ENCODE measurements at regions of chr10 and their contacts with region 1.

Region 1: DNA sequence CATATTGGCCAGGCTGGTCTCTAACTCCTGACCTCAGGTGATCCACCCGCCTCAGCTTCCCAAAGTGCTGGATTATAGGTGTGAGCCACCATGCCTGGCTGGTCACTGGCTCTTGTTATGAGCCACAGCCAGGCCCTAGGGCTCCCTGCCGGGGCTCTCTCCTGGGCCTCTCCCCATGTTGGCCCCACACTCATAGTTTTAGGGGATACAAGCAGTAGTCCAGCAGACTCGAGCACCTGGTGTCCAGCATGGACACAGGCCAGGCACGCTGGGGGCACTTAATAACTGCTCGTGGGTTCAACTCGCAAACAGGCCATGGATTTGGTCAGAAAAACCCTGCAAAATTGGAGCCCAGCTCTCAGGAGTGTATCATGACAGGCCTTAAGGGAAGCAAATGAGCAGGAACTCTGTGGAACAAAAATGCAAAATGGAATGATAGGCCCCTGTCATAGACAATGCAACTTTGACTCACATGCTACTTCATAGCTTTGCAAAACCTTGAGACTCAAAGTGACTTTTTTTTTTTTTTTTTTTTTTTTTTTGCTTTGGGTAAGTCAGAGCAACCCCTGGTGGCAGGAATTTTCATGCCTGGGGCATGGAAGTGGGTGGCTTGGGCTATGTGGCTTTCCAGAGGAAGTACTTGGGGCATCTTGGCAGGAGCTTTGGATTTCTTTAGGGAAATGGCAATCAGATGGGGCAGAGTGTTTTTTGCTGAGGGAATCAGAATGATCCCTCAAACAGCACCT is 62.5 kb downstream of the TACC2 start:
- H3K4me3 ChIP-seq: no peak overlapping the region
- H3K27ac ChIP-seq: no peak overlapping the region
- H3K4me1 ChIP-seq: 0 out of 2 replicates have a peak, but pooled peaks cover under 1% of the 10 kb centered on the region
- CTCF ChIP-seq: no peak

Region 2: GRCh38 chr10:122040786-122041185 is 10.6 kb before region 1 on chr10:
- CTCF ChIA-PET with region 1: interaction called, 11 read pairs
- POLR2A ChIA-PET with region 1: no interaction called
- H3K4me3 ChIP-seq: no peak overlapping the region
- H3K27ac ChIP-seq: no peak overlapping the region
- H3K4me1 ChIP-seq: peaks cover 6% of the 10 kb centered on the region
- CTCF ChIP-seq: no peak

Region 3: DNA sequence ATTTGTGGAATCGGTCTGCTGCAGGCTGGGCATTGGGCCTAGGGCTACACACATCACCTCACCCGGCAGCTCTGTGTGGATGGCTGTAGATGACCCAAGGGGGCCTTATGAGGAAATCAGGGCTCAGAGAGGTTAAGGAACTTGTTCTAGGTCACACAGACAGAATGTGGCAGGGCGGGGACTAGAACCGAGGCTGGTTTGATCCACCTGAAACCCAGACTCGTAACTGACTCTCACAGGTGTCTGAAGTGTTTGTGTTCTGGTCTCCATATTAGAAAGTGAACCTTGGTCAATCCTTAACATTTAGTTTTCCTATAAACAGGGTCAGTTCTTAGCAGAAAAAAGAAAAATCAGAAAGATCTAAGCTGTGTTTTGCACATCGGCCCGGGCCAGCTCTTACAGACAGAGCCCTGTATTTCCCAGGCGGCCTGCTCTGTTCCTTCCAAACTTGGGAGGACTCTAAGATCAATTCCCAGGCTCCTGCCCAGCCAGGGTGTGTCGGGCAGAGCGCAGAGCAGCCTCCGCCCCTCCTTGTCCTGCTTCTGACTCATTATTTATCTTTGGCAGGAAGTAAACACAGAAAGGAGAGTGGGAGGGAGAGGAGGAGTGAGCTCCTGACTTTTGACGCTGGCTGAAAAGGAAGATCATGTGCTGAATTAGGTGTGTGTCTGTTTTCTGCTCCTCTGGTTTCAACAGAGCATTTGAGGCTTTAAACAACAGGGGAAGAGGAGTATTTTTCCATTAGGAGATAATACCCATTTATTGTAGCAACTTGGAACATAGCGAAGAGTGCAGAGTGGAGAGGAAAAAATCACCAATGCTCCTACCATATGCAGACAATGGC is 11.6 kb after region 1 on chr10:
- CTCF ChIA-PET with region 1: interaction called, 28 read pairs
- POLR2A ChIA-PET with region 1: no interaction called
- H3K4me3 ChIP-seq: no peak overlapping the region
- H3K27ac ChIP-seq: peak overlapping the region; percentile 55
- H3K4me1 ChIP-seq: peaks cover 9% of the 10 kb centered on the region; the same call in 1 of the 2 replicates
- CTCF ChIP-seq: no peak

Region 4: DNA sequence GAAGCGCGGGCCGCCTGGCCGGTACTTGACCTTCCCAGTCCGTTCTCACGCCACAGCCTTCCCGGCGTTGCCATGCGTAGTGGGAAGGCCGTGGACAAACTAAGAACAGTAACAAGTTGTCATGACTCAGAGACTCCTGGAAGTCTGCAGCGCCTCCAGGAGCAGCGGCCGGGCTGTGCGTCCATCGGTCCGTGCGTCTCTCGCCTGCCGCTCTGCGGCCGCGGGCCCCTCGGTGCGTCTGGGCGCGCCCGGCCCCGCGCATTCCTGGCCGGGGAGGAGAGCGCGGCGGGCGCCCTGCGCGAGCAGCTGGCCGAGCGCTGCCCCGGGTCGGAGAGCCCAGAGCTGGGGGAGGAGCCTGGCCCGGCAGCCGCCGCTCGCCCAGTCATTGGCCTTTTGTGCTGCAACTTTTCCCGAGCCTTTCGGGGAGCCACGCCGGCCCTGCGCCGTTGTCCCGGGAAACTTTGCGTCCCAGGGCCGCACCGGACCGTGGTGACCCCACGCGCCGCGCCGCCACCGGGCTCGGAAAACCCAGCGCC is 61.3 kb after region 1 on chr10:
- CTCF ChIA-PET with region 1: interaction called, 19 read pairs
- POLR2A ChIA-PET with region 1: interaction called, 6 read pairs
- H3K4me3 ChIP-seq: peak overlapping the region; percentile 66
- H3K27ac ChIP-seq: peak overlapping the region; percentile 66; the same call in 1 of the 2 replicates
- H3K4me1 ChIP-seq: no peaks in the 10 kb centered on the region; the same call in 1 of the 2 replicates
- CTCF ChIP-seq: peak; percentile 53; the same call in 1 of the 2 replicates

Region 5: GRCh38 chr10:122142641-122143237 is 91.3 kb after region 1 on chr10:
- CTCF ChIA-PET with region 1: interaction called, 30 read pairs
- POLR2A ChIA-PET with region 1: no interaction called
- H3K4me3 ChIP-seq: no peak overlapping the region
- H3K27ac ChIP-seq: no peak overlapping the region
- H3K4me1 ChIP-seq: peaks cover 6% of the 10 kb centered on the region
- CTCF ChIP-seq: peak; percentile 74

Region 6: DNA sequence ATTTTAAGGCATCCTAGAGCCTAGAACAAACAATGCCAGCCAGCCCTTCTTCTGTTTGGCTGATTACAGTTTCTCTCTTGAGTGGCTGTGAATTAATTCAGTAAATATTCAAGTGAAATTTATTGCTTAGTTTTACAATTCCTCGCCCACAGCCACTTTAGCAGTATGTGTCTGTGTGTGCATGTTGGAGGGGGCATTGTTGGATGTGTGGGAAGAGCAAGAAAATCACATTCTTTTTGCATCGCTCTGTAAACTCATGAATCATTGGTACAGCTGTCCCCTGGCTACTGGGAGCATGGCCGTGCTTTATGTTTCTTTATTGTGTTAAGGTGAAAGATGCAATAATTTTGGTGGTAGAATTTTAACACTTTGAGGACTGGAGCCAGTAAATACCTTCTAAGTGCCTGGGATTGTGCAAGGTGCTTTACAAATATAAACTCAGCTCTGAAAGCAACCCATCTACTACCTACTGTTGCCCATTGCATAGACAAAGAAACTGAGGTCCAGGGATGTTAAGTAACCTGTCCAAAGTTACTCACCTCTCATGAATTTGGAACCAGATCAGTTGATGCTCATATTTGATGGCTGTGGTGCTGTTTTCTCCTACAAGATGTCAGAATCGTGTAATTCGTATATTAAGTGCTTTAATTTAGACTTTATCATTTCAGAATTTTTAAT is 129.8 kb after region 1 on chr10:
- CTCF ChIA-PET with region 1: no interaction called
- POLR2A ChIA-PET with region 1: no interaction called
- H3K4me3 ChIP-seq: no peak overlapping the region
- H3K27ac ChIP-seq: no peak overlapping the region
- H3K4me1 ChIP-seq: peaks cover 6% of the 10 kb centered on the region; the same call in 1 of the 2 replicates
- CTCF ChIP-seq: no peak

Measured in HEK293 (cell line).